ENCODE measurements at regions of chr5 and their contacts with region 1.

Region 1: GRCh38 chr5:87076936-87077335 is 190.7 kb upstream of the RASA1 start:
- DNase-seq: peak; percentile 87
- ATAC-seq: peak; percentile 88
- H3K4me3 ChIP-seq: no peak overlapping the region
- H3K27ac ChIP-seq: no peak overlapping the region
- H3K4me1 ChIP-seq: peaks cover 15% of the 10 kb centered on the region
- H3K27me3 ChIP-seq: no peaks in the 10 kb centered on the region
- CTCF ChIP-seq: no peak

Region 2: GRCh38 chr5:87850503-87851271 is 773.8 kb after region 1 on chr5:
- CTCF ChIA-PET with region 1: interaction called, 10 read pairs
- POLR2A ChIA-PET with region 1: no interaction called
- intact Hi-C with region 1: no loop called
- DNase-seq: peak; percentile 77
- ATAC-seq: peak; percentile 96
- H3K4me3 ChIP-seq: no peak overlapping the region
- H3K27ac ChIP-seq: no peak overlapping the region
- H3K4me1 ChIP-seq: peaks cover 19% of the 10 kb centered on the region
- H3K27me3 ChIP-seq: no peaks in the 10 kb centered on the region
- CTCF ChIP-seq: no peak

Measured in PC-3 (cell line).